ENCODE measurements at regions of chr5 and their contacts with region 1.

Region 1: GRCh38 chr5:87069974-87070624 is 197.6 kb upstream of the RASA1 start:
- DNase-seq: peak; percentile 84
- ATAC-seq: peak; percentile 85
- H3K4me3 ChIP-seq: no peak overlapping the region
- H3K27ac ChIP-seq: no peak overlapping the region
- H3K4me1 ChIP-seq: peaks cover 12% of the 10 kb centered on the region
- H3K27me3 ChIP-seq: no peaks in the 10 kb centered on the region
- CTCF ChIP-seq: peak; percentile 94

Region 2: DNA sequence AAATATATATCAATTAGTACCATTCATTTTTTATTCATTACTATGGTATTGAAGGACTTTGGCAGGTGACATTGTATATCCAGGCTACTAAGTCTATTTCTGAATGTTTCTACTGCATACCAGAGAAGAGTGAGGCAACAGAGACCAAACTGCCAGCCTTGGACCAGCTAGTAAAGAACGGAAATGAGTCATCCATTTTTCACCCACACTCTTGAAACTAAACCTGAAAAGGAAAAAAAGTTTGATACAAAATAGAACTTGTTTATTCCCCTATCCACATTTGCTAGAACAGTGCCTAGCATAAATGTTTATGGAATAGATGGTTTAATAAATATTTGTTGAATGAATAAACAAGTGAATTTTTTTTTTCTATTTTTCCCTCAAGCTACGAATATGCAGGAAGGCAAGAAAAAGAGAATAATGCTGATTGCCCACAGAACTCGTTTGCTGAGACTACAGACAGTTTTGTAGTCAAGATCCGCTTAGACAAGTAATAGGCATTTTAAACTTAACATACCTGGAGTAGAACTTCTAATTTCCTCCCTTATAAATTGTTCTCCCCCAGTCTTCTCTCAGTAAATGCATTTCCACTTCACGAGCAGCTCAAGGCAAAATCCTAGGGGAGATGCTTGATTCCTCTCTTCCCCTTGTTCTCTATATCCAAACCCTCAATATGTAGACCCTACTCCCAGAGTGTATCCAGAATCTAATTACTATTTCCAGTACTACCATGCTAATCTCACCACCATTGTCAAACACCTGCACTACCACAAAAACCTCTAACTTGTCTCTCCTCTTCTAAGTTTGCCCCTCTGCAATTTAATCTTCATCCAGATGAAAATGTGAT is 51.4 kb after region 1 on chr5:
- CTCF ChIA-PET with region 1: no interaction called
- POLR2A ChIA-PET with region 1: interaction called, 4 read pairs
- intact Hi-C with region 1: loop called (anchors 2 kb)
- DNase-seq: peak; percentile 96
- ATAC-seq: peak; percentile 80
- H3K4me3 ChIP-seq: peak overlapping the region; percentile 38; the same call in 1 of the 2 replicates
- H3K27ac ChIP-seq: peak overlapping the region; percentile 71
- H3K4me1 ChIP-seq: peaks cover 57% of the 10 kb centered on the region
- H3K27me3 ChIP-seq: no peaks in the 10 kb centered on the region
- CTCF ChIP-seq: no peak

Region 3: GRCh38 chr5:87141544-87141943 is 71.4 kb after region 1 on chr5:
- CTCF ChIA-PET with region 1: interaction called, 21 read pairs
- POLR2A ChIA-PET with region 1: no interaction called
- intact Hi-C with region 1: no loop called
- DNase-seq: no peak
- ATAC-seq: no peak
- H3K4me3 ChIP-seq: no peak overlapping the region
- H3K27ac ChIP-seq: no peak overlapping the region
- H3K4me1 ChIP-seq: peaks cover 12% of the 10 kb centered on the region
- H3K27me3 ChIP-seq: no peaks in the 10 kb centered on the region
- CTCF ChIP-seq: no peak

Region 4: DNA sequence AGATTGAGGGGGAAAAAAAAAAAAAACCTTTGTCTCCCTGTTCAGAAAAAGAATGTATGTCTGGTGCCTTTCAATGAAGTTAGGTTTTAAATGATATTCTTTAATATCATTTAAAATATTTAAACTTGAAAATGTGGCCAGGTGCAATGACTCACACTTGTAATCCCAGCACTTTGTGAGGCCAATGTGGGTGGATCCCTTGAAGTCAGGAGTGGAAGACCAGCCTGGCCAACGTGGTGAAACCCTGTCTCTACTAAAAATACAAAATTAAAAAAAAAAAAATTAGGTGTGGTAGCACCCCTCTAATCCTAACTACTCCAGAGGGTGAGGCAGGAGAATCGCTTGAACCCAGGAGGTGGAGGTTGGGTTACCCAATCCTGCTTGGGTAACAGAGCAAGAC is 86.5 kb after region 1 on chr5:
- CTCF ChIA-PET with region 1: interaction called, 11 read pairs
- POLR2A ChIA-PET with region 1: no interaction called
- intact Hi-C with region 1: no loop called
- DNase-seq: peak; percentile 45
- ATAC-seq: no peak
- H3K4me3 ChIP-seq: no peak overlapping the region
- H3K27ac ChIP-seq: no peak overlapping the region
- H3K4me1 ChIP-seq: peaks cover 21% of the 10 kb centered on the region
- H3K27me3 ChIP-seq: no peaks in the 10 kb centered on the region
- CTCF ChIP-seq: no peak

Region 5: DNA sequence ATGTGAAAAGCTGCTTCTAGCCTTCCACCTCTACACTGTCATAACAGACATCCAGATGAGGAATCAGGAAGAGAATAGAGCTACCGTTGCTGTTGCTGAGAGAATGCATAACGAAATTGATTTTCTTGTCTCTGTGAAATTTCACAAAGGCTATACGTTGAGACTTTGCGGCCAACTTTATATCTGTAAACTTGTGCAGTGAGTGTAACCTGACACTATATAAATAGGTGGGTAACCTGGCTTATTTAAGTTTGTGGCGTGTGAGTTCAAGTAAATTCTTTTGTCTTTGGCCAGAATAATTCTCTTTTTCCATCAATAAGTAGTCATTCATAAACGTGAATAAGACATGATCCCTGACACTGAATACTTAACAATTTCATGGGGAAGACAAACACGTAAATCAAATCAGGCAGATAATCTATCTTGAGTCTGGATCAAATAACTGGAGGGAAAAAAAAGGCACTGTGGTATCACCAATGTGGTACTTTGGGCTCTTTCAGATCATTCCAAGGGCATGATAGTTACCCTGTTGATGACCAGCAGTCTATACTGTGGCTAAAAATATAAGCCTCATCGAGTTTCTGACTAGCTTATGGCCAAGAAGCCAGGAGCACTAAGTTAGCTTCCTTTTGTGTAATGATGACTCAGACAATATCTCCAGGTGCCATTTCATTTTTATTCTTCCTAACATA is 99.3 kb after region 1 on chr5:
- CTCF ChIA-PET with region 1: interaction called, 5 read pairs
- POLR2A ChIA-PET with region 1: no interaction called
- intact Hi-C with region 1: loop called (anchors 5 kb)
- DNase-seq: peak; percentile 82
- ATAC-seq: peak; percentile 92
- H3K4me3 ChIP-seq: peak overlapping the region; percentile 51
- H3K27ac ChIP-seq: peak overlapping the region; percentile 86
- H3K4me1 ChIP-seq: peaks cover 23% of the 10 kb centered on the region
- H3K27me3 ChIP-seq: no peaks in the 10 kb centered on the region
- CTCF ChIP-seq: no peak

Region 6: DNA sequence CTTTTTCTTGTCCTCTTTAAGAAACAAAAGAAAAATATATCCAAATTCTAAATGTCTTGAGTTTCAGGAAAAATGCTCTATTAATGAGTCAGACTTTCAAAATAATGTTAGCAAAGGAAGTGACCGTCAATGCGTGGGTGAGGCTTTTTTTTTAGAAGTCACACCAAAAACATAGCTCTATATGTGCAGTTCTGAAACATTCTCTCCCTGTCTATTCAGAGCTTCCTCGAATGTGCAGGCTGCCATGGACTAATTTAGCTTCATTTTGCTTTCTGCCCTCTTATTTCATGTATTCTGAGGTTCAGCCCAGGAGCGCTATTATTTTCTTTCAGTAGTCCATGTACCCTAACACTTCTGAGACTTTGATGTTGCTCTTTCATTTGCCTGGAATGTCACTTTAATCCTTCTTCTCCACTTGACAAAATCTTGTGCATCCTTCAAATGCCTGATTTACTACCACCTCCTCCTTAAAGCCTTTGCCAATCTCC is 125.0 kb after region 1 on chr5:
- CTCF ChIA-PET with region 1: no interaction called
- POLR2A ChIA-PET with region 1: interaction called, 7 read pairs
- intact Hi-C with region 1: loop called (anchors 5 kb)
- DNase-seq: peak; percentile 68
- ATAC-seq: peak; percentile 78
- H3K4me3 ChIP-seq: peak overlapping the region; percentile 3; the same call in 1 of the 2 replicates
- H3K27ac ChIP-seq: peak overlapping the region; percentile 24
- H3K4me1 ChIP-seq: peaks cover 31% of the 10 kb centered on the region
- H3K27me3 ChIP-seq: no peaks in the 10 kb centered on the region
- CTCF ChIP-seq: no peak

Region 7: DNA sequence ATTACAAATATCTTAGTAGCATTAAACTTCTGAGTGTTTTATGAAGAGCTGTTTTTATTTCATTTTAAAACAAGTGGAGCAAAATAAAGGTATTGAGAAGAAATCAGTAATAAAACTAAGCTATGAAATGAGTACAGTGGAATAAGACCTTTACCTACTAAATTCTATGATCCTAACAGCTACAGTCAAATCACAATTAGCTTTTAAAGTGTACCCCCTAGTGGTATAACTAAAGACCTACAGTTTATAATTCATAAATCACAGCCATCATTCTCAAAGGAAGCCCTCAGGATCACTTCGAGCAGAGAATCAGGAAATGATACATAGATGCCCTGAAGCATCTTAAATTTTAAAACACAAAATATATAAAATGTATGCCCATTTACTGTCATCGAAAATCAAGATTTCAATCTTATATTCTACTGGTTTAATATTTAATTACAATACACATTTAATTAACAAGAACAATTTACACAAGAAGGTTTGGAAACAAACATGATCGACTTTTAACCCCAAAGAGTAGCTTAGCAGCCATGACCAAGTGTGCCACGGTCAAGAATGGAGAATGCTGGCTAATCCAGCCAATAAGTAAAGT is 330.3 kb after region 1 on chr5:
- CTCF ChIA-PET with region 1: interaction called, 20 read pairs
- POLR2A ChIA-PET with region 1: no interaction called
- intact Hi-C with region 1: loop called (anchors 1 kb)
- DNase-seq: peak; percentile 78
- ATAC-seq: peak; percentile 85
- H3K4me3 ChIP-seq: no peak overlapping the region
- H3K27ac ChIP-seq: no peak overlapping the region
- H3K4me1 ChIP-seq: peaks cover 7% of the 10 kb centered on the region; the same call in 1 of the 2 replicates
- H3K27me3 ChIP-seq: no peaks in the 10 kb centered on the region
- CTCF ChIP-seq: peak; percentile 94